A673 (cell line): ENCODE measurements at regions of chr4 and their contacts with region 1.

Region 1: GRCh38 chr4:46549125-46549524 is 159.2 kb upstream of the GABRA2 start:
- DNase-seq: no peak
- H3K4me3 ChIP-seq: no peak overlapping the region
- H3K27ac ChIP-seq: no peak overlapping the region
- H3K4me1 ChIP-seq: no peaks in the 10 kb centered on the region
- H3K27me3 ChIP-seq: peaks cover 42% of the 10 kb centered on the region
- CTCF ChIP-seq: no peak

Region 2: GRCh38 chr4:46179356-46179755 is 369.8 kb before region 1 on chr4:
- CTCF ChIA-PET with region 1: no interaction called
- POLR2A ChIA-PET with region 1: no interaction called
- intact Hi-C with region 1: loop called (anchors 5 kb)
- DNase-seq: no peak
- H3K4me3 ChIP-seq: no peak overlapping the region
- H3K27ac ChIP-seq: no peak overlapping the region
- H3K4me1 ChIP-seq: no peaks in the 10 kb centered on the region
- H3K27me3 ChIP-seq: no peaks in the 10 kb centered on the region
- CTCF ChIP-seq: no peak